ENCODE measurements at regions of chr11 and their contacts with region 1.

Region 1: DNA sequence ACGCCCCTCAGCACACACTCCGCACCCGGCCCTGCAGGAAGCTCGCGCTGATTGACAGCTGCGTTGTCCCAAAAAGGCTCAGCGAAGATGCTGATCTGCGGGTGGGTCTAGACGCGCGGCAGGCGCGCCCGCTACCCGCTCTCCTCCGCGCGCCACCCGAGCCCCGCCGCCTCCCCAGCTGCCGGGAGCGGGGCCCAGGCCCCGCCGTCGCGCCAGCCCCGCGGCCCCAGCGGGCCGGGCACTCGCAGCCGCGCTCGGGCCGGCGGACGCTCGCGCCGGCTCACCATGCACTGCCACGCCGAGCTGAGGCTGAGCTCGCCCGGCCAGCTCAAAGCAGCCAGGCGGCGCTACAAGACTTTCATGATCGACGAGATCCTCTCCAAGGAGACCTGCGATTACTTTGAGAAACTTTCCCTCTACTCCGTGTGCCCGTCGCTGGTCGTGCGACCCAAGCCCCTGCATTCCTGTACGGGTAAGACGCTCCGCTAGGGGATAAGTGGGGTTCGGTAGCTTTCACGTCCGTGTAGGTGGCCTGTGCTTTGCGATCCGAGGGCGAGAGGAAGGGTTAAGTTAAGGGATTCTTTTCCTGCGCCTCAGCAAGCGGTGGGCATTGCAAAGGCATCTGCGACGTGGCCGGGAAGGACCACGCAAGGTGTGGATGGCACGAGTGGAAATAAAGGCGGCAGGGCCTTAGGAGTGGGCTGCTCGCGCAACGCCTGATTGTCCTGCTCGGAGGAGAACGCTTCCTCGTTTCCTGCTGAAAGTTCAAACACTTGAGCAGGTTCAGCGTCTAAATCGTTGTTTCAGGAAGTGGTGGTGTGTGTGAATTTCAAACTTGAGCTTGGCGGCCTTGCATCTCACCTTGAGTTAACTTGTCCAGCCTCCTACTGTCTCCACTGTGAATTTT is at the start of gene BARX2:
- DNase-seq: peak; percentile 42
- CTCF ChIP-seq: peak; percentile 39

Region 2: DNA sequence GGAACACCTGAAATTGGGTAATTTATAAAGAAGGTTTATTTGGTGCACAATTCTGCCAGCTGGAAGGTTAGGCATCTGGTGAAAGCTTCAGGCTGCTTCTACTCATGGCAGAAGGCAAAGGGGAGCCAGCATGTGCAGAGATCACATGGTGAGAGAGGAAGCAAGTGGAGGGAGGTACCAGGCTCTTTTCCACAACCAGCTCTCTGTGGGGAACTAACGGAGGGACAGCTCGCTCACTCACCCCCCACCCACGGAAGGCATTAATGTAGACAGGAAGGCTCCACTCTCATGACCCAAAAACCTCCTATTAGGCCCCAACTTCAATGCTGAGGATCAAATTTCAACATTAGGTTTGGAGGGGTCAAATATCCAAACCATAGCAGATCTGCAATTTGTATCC is 108.3 kb before region 1 on chr11:
- CTCF ChIA-PET with region 1: no interaction called
- POLR2A ChIA-PET with region 1: no interaction called
- DNase-seq: no peak
- CTCF ChIP-seq: no peak

Region 3: DNA sequence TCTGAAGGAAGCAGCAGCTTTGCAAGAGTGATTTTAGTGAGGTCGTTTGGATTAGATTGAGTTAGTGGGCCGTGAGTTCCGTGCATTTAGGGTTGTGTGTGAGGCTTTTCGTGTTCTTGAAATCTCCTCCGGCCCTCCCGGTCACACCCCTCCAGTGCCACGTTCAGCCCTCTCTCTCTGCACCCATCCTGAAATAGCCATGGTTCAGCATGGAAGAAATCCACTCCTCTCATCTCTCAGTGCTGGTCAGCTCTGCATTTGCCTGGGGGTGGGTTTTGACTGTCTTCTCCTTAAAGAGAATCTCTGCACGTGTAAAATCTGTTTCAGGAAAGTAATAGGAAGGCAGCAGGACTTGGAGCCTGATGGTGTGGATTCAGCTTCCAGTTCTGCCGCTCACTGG is 19.4 kb after region 1 on chr11:
- CTCF ChIA-PET with region 1: no interaction called
- POLR2A ChIA-PET with region 1: no interaction called
- DNase-seq: no peak
- CTCF ChIP-seq: no peak

Region 4: DNA sequence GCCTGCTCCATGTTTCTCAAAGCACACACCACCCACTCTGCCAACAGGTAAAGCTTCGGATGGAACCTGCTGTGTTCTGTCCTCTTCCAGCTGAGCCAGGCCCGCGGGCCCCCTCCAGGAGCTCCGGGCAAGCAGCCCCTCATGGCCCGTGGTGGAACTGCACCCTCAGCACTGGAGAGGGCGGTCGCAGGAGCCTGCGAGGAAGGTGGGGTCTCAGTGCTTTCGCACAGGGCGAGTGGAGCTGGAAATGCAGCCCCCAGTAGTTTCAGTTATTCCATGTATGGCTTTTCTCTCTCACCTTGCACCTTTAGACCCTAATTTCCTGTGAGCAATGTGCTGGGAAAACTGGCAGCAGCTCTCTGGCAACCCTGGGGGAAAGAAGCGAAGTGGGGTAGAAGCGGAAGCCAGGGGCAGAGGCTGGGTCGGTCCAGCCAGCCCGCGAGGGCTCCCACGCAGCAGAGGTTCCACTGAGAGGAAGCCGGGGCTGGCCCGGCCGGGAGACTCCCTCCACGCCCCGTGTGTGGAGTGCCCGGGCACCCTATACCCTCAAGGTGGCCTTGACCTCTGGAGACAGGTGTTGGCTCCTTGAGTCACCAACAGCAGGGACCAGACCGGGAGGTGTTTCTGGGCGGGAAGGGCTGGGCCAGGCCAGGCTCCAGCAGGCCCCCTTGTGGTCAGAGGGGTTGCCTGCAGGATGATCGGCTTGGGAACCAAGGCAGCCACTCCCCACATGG is 319.7 kb after region 1 on chr11:
- CTCF ChIA-PET with region 1: interaction called, 11 read pairs
- POLR2A ChIA-PET with region 1: no interaction called
- DNase-seq: peak; percentile 54
- CTCF ChIP-seq: peak; percentile 75